B cell (primary cell): ENCODE measurements at regions of chr17 and their contacts with region 1.

Region 1: GRCh38 chr17:56592487-56593085 is 913 bp upstream of the NOG start:
- DNase-seq: peak; percentile 75
- ATAC-seq: peak; percentile 80
- H3K4me3 ChIP-seq: peak overlapping the region; percentile 2 to 49 (median 44)
- H3K4me3 Mint-ChIP-seq: peak overlapping the region; percentile 78
- H3K27ac ChIP-seq: no peak overlapping the region
- H3K27ac Mint-ChIP-seq: no peak overlapping the region
- H3K4me1 ChIP-seq: peaks cover 31 to 43% of the 10 kb centered on the region in 2 donors
- H3K4me1 Mint-ChIP-seq: peaks cover 30% of the 10 kb centered on the region
- H3K27me3 ChIP-seq: peaks cover 0 to 57% (median 28%) of the 10 kb centered on the region in 4 experiments
- H3K27me3 Mint-ChIP-seq: peaks cover 50% of the 10 kb centered on the region
- CTCF ChIP-seq: peak; percentile 89

Region 2: GRCh38 chr17:56653877-56654276 is 61.3 kb after region 1 on chr17:
- CTCF ChIA-PET with region 1: interaction called, 3 read pairs
- POLR2A ChIA-PET with region 1: no interaction called
- intact Hi-C with region 1: loop called (anchors 1 kb)
- DNase-seq: peak; percentile 64
- ATAC-seq: peak; percentile 62
- H3K4me3 ChIP-seq: no peak overlapping the region
- H3K4me3 Mint-ChIP-seq: no peak overlapping the region
- H3K27ac ChIP-seq: no peak overlapping the region
- H3K27ac Mint-ChIP-seq: no peak overlapping the region
- H3K4me1 ChIP-seq: no peaks in the 10 kb centered on the region
- H3K4me1 Mint-ChIP-seq: no peaks in the 10 kb centered on the region
- H3K27me3 ChIP-seq: peaks cover 0 to 4% (median 0%) of the 10 kb centered on the region in 4 experiments
- H3K27me3 Mint-ChIP-seq: peaks cover 7% of the 10 kb centered on the region
- CTCF ChIP-seq: peak; percentile 58

Region 3: DNA sequence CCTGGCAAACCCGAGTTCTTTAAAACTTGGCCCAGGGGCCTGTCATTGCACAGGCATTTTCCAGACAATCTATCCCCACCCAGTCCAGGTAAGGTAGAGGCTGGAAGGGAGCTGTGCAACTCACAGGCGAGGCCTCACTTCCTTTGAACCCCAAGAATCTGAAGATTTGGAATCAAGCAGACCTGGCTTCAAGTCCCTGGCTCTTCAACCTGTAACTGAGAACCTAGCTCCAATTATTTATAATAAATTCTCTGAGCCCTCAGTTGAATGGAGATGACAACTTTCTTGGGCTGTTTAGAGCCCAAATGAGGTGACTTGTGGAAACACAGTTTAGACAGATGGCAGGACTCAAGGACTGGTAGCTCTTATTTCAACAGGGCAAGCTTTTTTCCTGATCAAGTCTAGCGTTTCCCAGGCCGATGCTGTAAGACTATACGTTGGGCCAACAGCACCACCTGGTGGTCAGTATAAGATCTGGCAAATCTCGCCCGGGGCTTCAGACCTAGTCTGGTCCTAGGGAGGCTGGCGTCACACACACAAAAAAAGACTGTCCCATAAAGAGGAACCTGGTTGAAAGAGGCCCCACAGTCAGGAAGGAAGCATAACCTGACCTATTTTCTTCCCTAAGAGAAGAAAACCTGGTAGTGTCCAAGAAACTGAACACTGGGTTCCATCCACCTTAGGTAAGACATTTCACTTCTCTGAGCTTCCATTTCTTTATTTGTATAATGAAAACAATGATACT is 123.2 kb after region 1 on chr17:
- CTCF ChIA-PET with region 1: interaction called, 50 read pairs
- POLR2A ChIA-PET with region 1: no interaction called
- intact Hi-C with region 1: loop called (anchors 1 kb)
- DNase-seq: peak; percentile 77
- ATAC-seq: peak; percentile 88
- H3K4me3 ChIP-seq: no peak overlapping the region
- H3K4me3 Mint-ChIP-seq: no peak overlapping the region
- H3K27ac ChIP-seq: no peak overlapping the region
- H3K27ac Mint-ChIP-seq: no peak overlapping the region
- H3K4me1 ChIP-seq: peaks cover 3 to 5% of the 10 kb centered on the region in 2 donors
- H3K4me1 Mint-ChIP-seq: peaks cover 4% of the 10 kb centered on the region
- H3K27me3 ChIP-seq: no peaks in the 10 kb centered on the region
- H3K27me3 Mint-ChIP-seq: no peaks in the 10 kb centered on the region
- CTCF ChIP-seq: peak; percentile 86

Region 4: GRCh38 chr17:56779898-56780733 is 187.5 kb after region 1 on chr17:
- CTCF ChIA-PET with region 1: interaction called, 36 read pairs
- POLR2A ChIA-PET with region 1: interaction called, 3 read pairs
- intact Hi-C with region 1: no loop called
- DNase-seq: peak; percentile 85
- ATAC-seq: peak; percentile 96
- H3K4me3 ChIP-seq: peak overlapping the region; percentile 3 to 57 (median 48)
- H3K4me3 Mint-ChIP-seq: peak overlapping the region; percentile 88
- H3K27ac ChIP-seq: no peak overlapping the region
- H3K27ac Mint-ChIP-seq: peak overlapping the region; percentile 57
- H3K4me1 ChIP-seq: peaks cover 12% of the 10 kb centered on the region in 2 donors
- H3K4me1 Mint-ChIP-seq: peaks cover 12% of the 10 kb centered on the region
- H3K27me3 ChIP-seq: peaks cover 0 to 20% (median 4%) of the 10 kb centered on the region in 4 experiments
- H3K27me3 Mint-ChIP-seq: peaks cover 42% of the 10 kb centered on the region
- CTCF ChIP-seq: peak; percentile 99

Region 5: DNA sequence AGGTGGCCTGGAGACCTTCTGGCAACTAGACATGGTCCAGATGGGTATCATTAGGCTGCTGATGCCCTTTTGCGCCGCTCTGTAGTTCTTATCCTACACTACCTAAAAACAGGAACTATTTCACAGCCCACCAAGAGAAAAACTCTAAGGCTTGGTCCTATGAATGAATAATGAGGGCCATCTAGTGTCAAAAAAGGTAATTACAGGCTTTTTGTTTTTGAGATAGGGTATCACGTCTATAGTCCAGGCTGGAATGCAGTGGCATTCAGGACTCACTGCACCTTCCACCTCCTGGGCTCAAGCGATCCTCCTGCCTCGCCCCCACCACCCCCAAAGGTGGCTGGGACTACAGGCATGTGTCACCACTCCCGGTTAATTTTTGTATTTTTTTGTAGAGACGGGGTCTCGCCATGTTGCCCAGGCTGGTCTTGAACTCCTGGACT is 347.3 kb after region 1 on chr17:
- CTCF ChIA-PET with region 1: interaction called, 4 read pairs
- POLR2A ChIA-PET with region 1: no interaction called
- intact Hi-C with region 1: loop called (anchors 5 kb)
- DNase-seq: peak; percentile 83
- ATAC-seq: peak; percentile 91
- H3K4me3 ChIP-seq: no peak overlapping the region
- H3K4me3 Mint-ChIP-seq: no peak overlapping the region
- H3K27ac ChIP-seq: no peak overlapping the region
- H3K27ac Mint-ChIP-seq: no peak overlapping the region
- H3K4me1 ChIP-seq: peaks cover 0 to 3% of the 10 kb centered on the region in 2 donors
- H3K4me1 Mint-ChIP-seq: peaks cover 4% of the 10 kb centered on the region
- H3K27me3 ChIP-seq: no peaks in the 10 kb centered on the region
- H3K27me3 Mint-ChIP-seq: no peaks in the 10 kb centered on the region
- CTCF ChIP-seq: peak; percentile 84